PC-3 (cell line): ENCODE measurements at regions of chr2 and their contacts with region 1.

Region 1: GRCh38 chr2:164538240-164538866 is 82.9 kb downstream of the GRB14 start:
- DNase-seq: peak; percentile 73
- ATAC-seq: peak; percentile 82
- H3K4me3 ChIP-seq: no peak overlapping the region
- H3K27ac ChIP-seq: no peak overlapping the region
- H3K4me1 ChIP-seq: peaks cover 19% of the 10 kb centered on the region; the same call in 1 of the 2 replicates
- H3K27me3 ChIP-seq: no peaks in the 10 kb centered on the region
- CTCF ChIP-seq: peak; percentile 92

Region 2: GRCh38 chr2:164314148-164314547 is 224.2 kb before region 1 on chr2:
- CTCF ChIA-PET with region 1: no interaction called
- POLR2A ChIA-PET with region 1: no interaction called
- intact Hi-C with region 1: no loop called
- DNase-seq: peak; percentile 14
- ATAC-seq: no peak
- H3K4me3 ChIP-seq: no peak overlapping the region
- H3K27ac ChIP-seq: no peak overlapping the region
- H3K4me1 ChIP-seq: no peaks in the 10 kb centered on the region
- H3K27me3 ChIP-seq: peaks cover 5% of the 10 kb centered on the region
- CTCF ChIP-seq: no peak

Region 3: DNA sequence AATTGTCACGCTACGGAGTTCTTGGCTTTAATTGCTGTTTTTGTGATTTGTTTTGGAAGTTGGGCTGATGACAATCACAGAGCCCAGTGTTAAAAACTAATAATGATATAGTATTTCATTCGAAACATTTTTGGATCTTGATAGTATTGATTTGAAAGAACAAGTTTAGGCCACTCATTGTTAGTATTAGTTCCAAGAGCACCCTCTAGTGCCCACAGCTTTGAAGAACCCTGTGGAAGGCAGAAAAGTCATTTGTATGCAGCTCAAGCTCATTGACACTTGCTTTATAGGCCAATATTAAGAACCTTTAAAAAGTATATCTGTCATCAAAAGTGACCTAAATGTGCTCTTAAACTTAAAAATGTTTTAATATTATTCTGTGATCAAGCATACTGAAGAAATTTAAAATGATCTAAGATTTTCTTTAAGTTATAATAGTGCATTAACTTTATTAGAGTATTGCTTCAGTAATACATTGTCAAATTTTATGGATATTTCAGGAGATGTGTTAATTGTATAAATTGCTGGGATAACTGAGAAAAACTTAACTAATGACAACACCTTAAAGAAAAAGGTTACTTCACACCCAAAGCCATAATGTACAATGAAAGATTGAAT is 108.1 kb before region 1 on chr2:
- CTCF ChIA-PET with region 1: no interaction called
- POLR2A ChIA-PET with region 1: no interaction called
- intact Hi-C with region 1: no loop called
- DNase-seq: peak; percentile 64
- ATAC-seq: no peak
- H3K4me3 ChIP-seq: no peak overlapping the region
- H3K27ac ChIP-seq: no peak overlapping the region
- H3K4me1 ChIP-seq: no peaks in the 10 kb centered on the region
- H3K27me3 ChIP-seq: peaks cover 78% of the 10 kb centered on the region
- CTCF ChIP-seq: peak; percentile 83

Region 4: DNA sequence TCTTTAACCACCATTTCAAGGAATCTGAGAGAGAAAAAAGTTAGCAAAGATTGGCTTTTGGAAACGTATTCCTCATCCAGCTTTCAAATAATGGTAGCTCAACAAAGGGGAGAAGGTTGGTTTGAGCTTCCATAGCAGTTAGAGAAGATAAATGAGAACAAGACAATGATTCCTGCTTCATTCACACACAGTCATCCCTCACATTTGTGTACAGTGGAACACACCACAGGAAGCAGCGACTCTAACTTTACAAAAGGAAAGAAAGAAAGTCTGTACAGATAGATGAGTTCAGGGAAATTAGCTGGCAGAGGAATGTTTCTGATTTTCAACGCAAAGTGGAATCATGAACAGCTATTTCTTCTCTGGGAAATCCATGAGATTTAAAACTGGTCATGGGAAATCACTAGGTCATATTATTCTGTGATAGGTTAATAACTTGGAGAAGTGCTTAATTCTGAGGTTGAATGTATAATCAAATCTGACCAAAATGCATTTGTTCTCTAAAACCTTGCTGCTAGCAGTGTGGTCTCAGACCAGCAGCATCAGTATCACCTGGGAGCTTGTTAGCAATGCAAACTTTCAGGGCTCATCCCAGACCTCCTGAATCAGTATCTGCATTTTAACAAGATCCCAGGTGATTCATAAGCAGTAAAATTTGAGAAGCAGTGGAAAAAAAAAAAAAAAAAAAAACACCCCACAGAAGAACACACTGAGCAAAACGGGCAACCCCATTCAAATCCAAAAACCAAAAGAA is 29.1 kb before region 1 on chr2:
- CTCF ChIA-PET with region 1: interaction called, 16 read pairs
- POLR2A ChIA-PET with region 1: no interaction called
- intact Hi-C with region 1: no loop called
- DNase-seq: peak; percentile 45
- ATAC-seq: peak; percentile 40
- H3K4me3 ChIP-seq: no peak overlapping the region
- H3K27ac ChIP-seq: no peak overlapping the region
- H3K4me1 ChIP-seq: peaks cover 20% of the 10 kb centered on the region
- H3K27me3 ChIP-seq: no peaks in the 10 kb centered on the region
- CTCF ChIP-seq: no peak